Right ventricle myocardium inferior (tissue), 1 donor: ENCODE measurements at regions of chr10 and their contacts with region 1.

Region 1: DNA sequence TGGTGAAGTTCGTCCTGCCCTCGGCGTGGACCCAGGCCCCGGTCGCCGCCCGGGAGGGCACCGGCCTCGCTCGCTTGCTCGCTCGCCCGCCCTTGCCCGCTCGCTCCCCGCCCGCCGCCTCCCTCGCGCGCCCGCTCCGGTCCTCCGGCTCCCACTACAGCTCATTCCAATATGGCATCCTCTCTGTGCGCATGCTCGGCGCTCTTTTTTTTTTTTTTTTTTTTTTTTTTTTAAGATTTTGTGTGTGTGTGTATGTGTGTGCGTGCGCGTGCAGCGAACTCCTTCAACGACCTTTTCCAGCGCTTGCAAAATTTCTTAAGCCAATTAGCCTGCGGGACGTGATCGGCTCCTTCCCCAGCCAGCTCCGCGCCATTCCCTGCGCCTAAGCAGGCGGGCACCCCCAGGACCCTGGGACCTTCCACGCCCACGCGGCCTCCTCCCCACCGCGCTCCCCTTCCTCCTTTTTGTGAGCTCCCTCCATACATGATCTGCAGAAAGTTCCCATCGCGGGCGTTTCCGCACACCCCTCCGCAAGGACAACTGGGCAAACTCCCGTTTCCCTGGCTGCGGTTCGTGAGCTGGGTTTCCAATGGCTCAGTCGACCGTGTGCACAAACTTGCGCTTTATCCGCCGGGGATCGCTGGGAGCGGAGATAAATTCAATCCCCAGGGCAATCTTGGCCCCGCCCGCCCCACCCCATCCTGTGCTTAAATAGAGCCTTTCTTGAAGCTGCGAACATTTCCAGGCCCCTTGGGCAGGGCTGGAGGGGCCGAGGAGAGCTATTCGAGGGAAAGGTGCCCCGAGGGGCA is at the start of gene SFMBT2:
- DNase-seq: peak; percentile 83
- ATAC-seq: peak; percentile 77
- total RNA-seq, gene SFMBT2: 9.6 TPM

Region 2: GRCh38 chr10:6667679-6668270 is 743.3 kb before region 1 on chr10:
- intact Hi-C with region 1: loop called (anchors 5 kb)
- DNase-seq: no peak
- ATAC-seq: no peak

Region 3: DNA sequence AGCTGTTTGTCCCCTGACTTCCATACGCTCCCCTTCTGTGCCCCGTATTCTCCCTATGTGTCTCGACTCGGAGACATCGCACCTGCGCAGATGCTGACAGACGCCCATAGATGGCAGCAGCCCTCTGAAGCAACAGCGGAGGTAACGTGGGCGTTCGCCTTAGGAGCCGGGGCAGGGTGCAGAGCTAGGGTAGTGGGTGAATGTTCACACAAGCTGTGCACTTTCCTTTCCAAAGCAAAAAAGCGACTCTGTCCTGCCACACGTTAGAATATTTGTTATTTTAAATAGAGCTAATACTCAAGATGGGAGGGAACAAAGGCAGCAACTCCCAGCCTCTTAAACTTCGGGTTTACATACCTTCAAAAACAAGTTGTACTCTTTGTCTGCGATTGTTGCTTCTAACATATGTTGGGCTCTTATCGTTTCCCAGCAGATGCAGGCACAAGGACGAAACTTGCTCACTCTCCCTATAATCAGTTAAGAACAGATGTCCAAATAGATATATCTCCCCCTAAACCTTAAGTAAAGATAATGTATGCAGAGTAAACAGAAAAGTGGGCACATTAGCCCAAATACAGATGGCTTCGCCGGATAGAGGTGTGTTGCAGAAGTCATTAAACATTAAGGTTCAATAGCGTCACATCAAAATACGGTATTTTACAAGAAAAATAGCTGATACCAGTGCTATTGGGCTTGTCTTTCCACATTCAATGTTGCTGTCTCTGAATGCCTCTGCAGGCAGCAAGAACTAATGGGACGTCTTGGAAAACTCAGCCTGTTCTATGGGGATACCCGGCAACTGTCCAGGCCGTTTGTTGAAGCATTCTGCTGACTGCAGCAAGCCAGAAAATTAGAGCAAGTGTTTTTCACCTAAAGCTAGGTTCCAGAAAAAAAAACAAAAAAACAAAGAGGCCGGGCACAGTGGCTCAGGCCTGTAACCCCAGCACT is 490.7 kb before region 1 on chr10:
- intact Hi-C with region 1: loop called (anchors 2 kb)
- DNase-seq: peak; percentile 86
- ATAC-seq: peak; percentile 95

Region 4: DNA sequence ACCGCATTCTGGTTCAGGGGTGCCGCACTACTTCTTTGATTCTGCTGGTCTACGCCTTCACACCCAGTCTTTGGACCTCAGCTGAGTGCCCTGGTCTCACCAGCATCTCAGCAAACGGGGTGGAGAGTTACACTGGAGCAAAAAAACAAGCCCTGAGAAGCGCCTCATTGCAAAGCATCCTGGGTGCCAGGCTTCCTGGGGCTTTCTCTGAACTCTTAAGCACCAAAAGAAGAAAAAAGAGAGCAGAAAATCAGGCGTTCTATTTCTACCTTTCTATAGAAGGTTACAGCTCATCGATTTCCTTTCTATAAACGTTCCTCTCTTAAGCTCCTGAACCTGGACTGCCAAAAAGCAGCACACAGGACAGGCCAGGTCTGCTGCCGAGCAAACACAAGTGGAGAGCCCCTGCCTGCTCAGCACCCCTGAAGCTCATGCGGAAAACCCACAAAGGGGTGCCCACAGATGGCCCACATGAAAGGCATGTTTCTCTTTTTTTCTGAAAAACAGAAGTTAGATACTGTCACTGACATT is 218.2 kb before region 1 on chr10:
- intact Hi-C with region 1: loop called (anchors 5 kb)
- DNase-seq: no peak
- ATAC-seq: no peak

Region 5: DNA sequence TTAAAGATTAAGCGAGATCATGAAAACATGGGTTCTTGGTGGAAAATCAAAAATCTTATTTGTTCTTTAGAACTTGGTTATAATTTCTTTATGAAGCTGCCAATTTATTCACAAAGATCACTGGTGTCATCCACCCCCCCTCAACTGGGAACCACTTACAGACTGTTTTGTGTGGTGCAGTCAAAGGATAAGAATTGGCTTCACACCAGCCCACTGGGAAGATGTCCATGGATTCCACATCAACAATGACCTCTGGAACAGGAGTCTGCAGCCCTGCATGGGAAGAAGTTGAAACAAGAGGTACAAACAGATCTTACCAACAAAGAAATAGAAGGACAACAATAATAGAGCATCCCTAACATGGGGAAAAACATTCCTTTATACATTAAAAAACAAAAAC is 205.4 kb before region 1 on chr10:
- intact Hi-C with region 1: loop called (anchors 5 kb)
- DNase-seq: no peak
- ATAC-seq: peak; percentile 85

Region 6: GRCh38 chr10:7260412-7260900 is 150.6 kb before region 1 on chr10:
- intact Hi-C with region 1: loop called (anchors 1 kb)
- DNase-seq: no peak
- ATAC-seq: peak; percentile 98

Region 7: DNA sequence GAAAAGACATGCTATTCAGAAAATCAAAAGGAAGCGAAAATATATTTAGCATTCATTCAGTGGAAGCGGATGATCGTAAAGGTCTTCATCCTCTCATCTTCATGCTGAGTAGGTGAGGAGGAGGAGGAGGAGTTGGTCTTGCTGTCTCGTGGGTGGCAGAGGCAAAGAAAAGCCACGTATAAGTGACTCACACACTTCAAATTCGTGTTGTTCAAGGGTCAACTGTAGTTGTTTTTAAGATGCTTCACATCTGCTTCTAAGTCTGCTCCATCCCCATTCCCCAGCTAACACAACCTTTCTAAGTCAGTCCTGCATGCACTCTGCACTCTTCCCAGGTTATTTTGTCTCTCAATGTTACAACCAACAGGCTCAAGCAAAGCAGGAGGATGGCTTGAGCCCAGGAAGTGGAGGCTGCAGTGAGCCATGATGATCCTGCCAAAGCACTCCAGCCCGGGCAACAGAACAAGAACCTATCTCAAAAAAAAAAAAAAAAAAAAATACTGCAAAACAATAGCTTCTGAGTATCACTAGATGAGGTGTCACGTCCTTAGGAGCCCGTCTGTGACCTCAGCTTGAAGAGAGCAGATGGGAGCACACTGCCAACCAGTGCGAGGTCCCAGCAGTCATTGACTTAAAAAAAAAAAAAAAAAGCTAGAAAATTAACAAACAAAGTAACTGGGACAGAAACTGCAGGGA is 70.7 kb before region 1 on chr10:
- intact Hi-C with region 1: loop called (anchors 2 kb)
- DNase-seq: no peak
- ATAC-seq: peak; percentile 90